ENCODE measurements at regions of chr9 and their contacts with region 1.

Region 1: DNA sequence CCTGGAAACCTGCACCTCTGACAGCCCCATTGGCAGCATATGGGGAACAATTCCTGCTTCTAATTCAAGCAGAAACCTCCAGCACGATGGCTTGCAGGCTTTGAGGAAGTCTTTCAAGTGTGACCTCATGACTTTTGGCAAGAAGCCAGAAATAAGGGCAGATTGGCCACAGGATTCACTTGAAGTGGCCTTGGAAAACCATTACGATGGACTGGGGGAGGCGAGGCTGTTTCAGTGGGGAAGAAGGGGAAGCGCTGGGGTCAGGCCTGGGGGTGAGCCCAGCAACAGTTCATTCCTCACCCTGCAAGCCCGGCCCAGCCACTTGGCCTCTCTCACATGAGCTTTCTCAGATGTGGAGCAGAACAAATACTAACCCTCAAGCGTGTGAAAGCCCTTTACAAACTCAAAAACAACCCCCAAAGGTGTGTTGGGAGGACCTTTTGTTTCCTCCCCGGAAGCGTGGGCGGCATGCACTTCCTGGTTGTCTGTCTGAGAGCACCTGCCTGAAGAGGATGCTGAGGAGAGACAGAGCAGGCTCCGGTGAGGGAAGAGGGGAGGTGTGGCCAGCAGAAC is 26.9 kb upstream of the EEIG1 start:
- DNase-seq: peak; percentile 86
- H3K4me3 ChIP-seq: no peak overlapping the region
- H3K27ac ChIP-seq: peak overlapping the region; percentile 54
- H3K4me1 ChIP-seq: peaks cover 37% of the 10 kb centered on the region
- H3K27me3 ChIP-seq: no peaks in the 10 kb centered on the region
- CTCF ChIP-seq: no peak
- POLR2A ChIP-seq: no peak

Region 2: DNA sequence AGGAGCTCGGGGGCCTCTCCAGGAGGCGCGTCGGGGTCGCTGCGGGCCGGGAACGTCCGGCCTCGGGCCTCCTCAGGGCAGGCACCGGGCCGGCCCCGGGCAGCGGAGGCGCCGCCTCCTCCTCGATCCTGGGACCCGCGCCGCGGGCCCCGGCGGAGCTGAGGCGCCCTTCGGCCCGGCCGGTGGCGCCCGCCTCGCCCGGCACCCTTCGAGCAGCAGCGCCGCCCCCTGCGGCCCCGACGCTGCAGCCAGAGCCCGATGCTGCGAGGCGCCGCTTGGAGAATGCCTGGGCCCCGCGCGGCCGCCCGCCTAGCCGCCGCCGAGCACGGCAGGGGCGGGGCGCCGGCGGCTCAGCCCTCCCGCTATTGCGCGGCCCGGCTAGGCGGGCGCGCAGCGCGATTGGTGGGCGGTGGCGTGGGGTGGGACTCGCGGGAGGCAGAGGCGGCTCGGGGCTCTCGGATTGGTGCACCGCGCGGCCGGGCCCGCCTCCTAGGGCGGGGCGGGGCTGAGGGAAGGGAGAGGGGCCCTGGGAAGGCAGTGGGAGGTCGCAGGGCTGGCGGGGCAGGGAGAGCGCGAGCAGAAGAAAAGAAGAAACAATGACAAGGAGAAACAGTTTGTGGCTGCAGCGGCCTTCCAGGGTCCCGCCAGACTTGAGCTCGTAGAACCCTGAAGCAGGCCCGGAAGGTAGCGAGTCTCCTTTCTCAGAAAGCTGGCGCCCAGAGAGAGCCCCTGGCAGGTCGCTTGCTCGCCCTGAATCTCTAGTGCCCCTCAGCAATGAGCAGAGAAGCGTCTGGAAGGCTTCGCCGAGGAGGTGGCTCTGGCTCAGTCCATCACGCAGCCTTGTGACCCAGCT is 26.7 kb before region 1 on chr9 and contains the start of gene EEIG1:
- CTCF ChIA-PET with region 1: interaction called, 3 read pairs
- POLR2A ChIA-PET with region 1: no interaction called
- dilution Hi-C with region 1: no loop called
- intact Hi-C with region 1: loop called (anchors 1 kb)
- DNase-seq: peak; percentile 94
- H3K4me3 ChIP-seq: peak within 1 kb of the TSS; percentile 26 to 61 (median 61)
- H3K27ac ChIP-seq: peak within 1 kb of the TSS; percentile 54
- H3K4me1 ChIP-seq: peaks cover 22% of the 10 kb centered on the region
- H3K27me3 ChIP-seq: no peaks in the 10 kb centered on the region
- CTCF ChIP-seq: no peak
- POLR2A ChIP-seq: peak; percentile 79
- total RNA-seq, gene EEIG1: 16.4 and 19.0 TPM in 2 replicates

Region 3: GRCh38 chr9:128026773-128027541 is 19.3 kb after region 1 on chr9:
- CTCF ChIA-PET with region 1: interaction called, 6 read pairs
- POLR2A ChIA-PET with region 1: no interaction called
- dilution Hi-C with region 1: no loop called
- intact Hi-C with region 1: loop called (anchors 2 kb)
- DNase-seq: peak; percentile 32
- H3K4me3 ChIP-seq: no peak overlapping the region
- H3K27ac ChIP-seq: peak overlapping the region; percentile 13
- H3K4me1 ChIP-seq: peaks cover 13% of the 10 kb centered on the region
- H3K27me3 ChIP-seq: no peaks in the 10 kb centered on the region
- CTCF ChIP-seq: no peak
- POLR2A ChIP-seq: no peak

Region 4: DNA sequence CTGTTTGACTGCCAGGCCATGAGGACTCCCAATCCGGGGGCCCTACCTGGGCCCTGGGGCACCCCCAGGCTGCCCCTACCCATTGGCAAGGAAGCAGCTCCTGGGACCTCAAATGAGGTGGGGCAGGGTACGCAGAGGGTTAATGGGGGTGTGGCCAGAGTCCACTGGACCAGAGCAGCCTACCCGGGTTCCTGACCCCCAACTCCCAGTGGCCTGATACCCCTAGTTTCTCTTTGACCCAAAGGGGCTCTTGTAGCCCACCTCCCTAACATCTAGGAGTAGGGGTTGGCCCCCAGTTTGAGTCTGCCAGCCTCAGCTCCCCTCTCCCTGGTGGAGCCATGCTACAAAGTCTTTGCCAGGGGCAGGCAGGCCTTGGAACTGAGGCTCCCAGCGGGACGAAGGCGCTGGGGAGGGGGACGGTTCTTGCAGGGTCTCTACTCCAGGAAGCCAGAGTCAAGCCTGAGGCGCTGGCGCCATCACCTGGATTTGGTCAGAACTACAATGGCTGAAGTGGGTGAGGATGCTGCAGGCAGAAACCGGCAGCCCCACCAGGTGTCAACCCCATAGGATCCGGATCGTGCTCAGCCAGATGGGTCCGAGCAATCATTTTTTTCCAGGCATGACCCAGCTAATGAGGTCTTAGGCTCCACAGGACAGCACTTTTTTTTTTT is 404.6 kb after region 1 on chr9:
- CTCF ChIA-PET with region 1: no interaction called
- POLR2A ChIA-PET with region 1: no interaction called
- dilution Hi-C with region 1: no loop called
- intact Hi-C with region 1: no loop called
- DNase-seq: peak; percentile 76
- H3K4me3 ChIP-seq: no peak overlapping the region
- H3K27ac ChIP-seq: no peak overlapping the region
- H3K4me1 ChIP-seq: no peaks in the 10 kb centered on the region
- H3K27me3 ChIP-seq: peaks cover 9% of the 10 kb centered on the region in 2 experiments
- CTCF ChIP-seq: peak; percentile 54 to 84
- POLR2A ChIP-seq: no peak

Measured in endothelial cell of umbilical vein (primary cell).